B cell (primary cell): ENCODE measurements at regions of chr16 and their contacts with region 1.

Region 1: DNA sequence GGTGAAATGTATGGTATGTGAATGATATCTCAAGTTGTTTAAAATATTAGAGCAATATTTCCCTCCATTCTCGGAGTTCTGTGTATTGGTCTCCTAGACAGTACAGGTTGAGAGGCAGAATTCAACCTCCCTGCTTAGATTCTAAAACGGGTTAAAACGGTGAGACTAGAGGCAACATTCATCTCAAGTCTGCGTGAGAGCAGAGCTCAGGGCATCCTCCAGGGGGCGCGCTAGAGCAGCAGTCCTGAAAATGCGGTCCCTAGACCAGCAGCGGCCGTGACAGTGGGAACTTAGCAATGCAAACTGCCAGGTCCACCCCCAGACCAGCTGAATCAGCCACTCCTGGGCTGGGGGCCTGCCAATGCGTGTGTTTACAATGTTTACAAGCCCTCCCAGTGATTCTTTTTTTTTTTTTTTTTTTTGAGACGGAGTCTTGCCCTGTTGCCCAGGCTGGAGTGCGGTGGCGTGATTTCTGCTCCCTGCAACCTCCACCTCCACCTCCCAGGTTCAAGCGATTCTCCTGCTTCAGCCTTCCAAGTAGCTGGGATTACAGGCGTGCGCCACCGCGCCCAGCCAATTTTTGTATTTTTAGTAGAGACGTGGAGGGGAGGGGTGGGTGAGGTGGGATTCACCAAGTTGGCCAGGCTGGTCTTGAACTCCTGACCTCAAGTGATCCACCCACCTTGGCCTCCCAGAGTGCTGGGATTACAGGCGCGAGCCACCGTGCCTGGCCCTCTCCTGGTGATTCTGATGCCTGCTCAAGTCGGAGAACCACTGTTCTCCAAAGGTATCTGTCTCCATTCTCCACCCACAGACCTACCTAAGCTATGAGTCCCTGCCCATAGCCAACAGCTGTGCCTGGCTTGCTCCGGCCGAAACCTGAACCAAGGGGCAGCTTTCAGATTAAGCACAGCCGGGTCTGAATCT is 24.2 kb downstream of the KLHL36 start:
- DNase-seq: peak; percentile 82
- ATAC-seq: peak; percentile 96
- H3K4me3 ChIP-seq: no peak overlapping the region
- H3K4me3 Mint-ChIP-seq: no peak overlapping the region
- H3K27ac ChIP-seq: no peak overlapping the region
- H3K27ac Mint-ChIP-seq: peak overlapping the region; percentile 28
- H3K4me1 ChIP-seq: peaks cover 0 to 15% of the 10 kb centered on the region in 2 donors
- H3K4me1 Mint-ChIP-seq: peaks cover 10% of the 10 kb centered on the region
- H3K27me3 ChIP-seq: no peaks in the 10 kb centered on the region
- H3K27me3 Mint-ChIP-seq: peaks cover 3% of the 10 kb centered on the region
- CTCF ChIP-seq: peak; percentile 91

Region 2: DNA sequence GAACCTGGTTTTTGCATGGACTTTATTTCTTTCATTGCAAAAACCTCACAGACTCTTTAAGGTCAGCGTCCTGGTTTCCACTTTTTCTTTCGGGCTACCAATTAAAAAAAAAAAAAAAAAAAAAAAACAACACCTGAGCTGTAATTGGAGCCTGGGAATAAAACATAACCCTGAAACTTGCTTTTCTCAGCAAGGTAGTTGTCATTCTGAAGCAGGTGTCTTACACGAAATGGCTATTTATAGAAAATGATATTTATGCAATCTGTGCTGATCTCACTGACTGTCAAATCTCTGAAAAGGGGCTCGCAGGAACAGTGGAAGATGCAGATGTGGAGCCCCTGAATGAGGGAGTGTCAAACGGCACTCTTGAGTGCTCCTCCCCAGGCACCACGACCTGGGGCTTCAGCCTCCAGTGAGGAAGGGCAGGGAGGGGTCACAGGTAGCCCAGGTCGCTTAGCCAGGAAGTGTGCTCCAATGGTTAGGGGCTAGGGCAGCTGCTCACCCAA is 44.3 kb before region 1 on chr16:
- CTCF ChIA-PET with region 1: interaction called, 37 read pairs
- POLR2A ChIA-PET with region 1: no interaction called
- intact Hi-C with region 1: loop called (anchors 2 kb)
- DNase-seq: no peak
- ATAC-seq: no peak
- H3K4me3 ChIP-seq: no peak overlapping the region
- H3K4me3 Mint-ChIP-seq: no peak overlapping the region
- H3K27ac ChIP-seq: no peak overlapping the region
- H3K27ac Mint-ChIP-seq: no peak overlapping the region
- H3K4me1 ChIP-seq: peaks cover 13 to 33% of the 10 kb centered on the region in 2 donors
- H3K4me1 Mint-ChIP-seq: peaks cover 26% of the 10 kb centered on the region
- H3K27me3 ChIP-seq: no peaks in the 10 kb centered on the region
- H3K27me3 Mint-ChIP-seq: no peaks in the 10 kb centered on the region
- CTCF ChIP-seq: no peak

Region 3: GRCh38 chr16:84687715-84688114 is 15.2 kb after region 1 on chr16:
- CTCF ChIA-PET with region 1: interaction called, 19 read pairs
- POLR2A ChIA-PET with region 1: interaction called, 4 read pairs
- intact Hi-C with region 1: no loop called
- DNase-seq: peak; percentile 72
- ATAC-seq: peak; percentile 97
- H3K4me3 ChIP-seq: no peak overlapping the region
- H3K4me3 Mint-ChIP-seq: peak overlapping the region; percentile 74
- H3K27ac ChIP-seq: no peak overlapping the region
- H3K27ac Mint-ChIP-seq: peak overlapping the region; percentile 85
- H3K4me1 ChIP-seq: peaks cover 10 to 17% of the 10 kb centered on the region in 2 donors
- H3K4me1 Mint-ChIP-seq: peaks cover 21% of the 10 kb centered on the region
- H3K27me3 ChIP-seq: no peaks in the 10 kb centered on the region
- H3K27me3 Mint-ChIP-seq: peaks cover 7% of the 10 kb centered on the region
- CTCF ChIP-seq: no peak

Region 4: GRCh38 chr16:84720177-84720579 is 47.6 kb after region 1 on chr16:
- CTCF ChIA-PET with region 1: interaction called, 108 read pairs
- POLR2A ChIA-PET with region 1: interaction called, 6 read pairs
- intact Hi-C with region 1: no loop called
- DNase-seq: no peak
- ATAC-seq: no peak
- H3K4me3 ChIP-seq: no peak overlapping the region
- H3K4me3 Mint-ChIP-seq: no peak overlapping the region
- H3K27ac ChIP-seq: peak overlapping the region in 1 of 2 donors; percentile 1
- H3K27ac Mint-ChIP-seq: peak overlapping the region; percentile 26
- H3K4me1 ChIP-seq: peaks cover 16 to 24% of the 10 kb centered on the region in 2 donors
- H3K4me1 Mint-ChIP-seq: peaks cover 63% of the 10 kb centered on the region
- H3K27me3 ChIP-seq: no peaks in the 10 kb centered on the region
- H3K27me3 Mint-ChIP-seq: no peaks in the 10 kb centered on the region
- CTCF ChIP-seq: no peak

Region 5: DNA sequence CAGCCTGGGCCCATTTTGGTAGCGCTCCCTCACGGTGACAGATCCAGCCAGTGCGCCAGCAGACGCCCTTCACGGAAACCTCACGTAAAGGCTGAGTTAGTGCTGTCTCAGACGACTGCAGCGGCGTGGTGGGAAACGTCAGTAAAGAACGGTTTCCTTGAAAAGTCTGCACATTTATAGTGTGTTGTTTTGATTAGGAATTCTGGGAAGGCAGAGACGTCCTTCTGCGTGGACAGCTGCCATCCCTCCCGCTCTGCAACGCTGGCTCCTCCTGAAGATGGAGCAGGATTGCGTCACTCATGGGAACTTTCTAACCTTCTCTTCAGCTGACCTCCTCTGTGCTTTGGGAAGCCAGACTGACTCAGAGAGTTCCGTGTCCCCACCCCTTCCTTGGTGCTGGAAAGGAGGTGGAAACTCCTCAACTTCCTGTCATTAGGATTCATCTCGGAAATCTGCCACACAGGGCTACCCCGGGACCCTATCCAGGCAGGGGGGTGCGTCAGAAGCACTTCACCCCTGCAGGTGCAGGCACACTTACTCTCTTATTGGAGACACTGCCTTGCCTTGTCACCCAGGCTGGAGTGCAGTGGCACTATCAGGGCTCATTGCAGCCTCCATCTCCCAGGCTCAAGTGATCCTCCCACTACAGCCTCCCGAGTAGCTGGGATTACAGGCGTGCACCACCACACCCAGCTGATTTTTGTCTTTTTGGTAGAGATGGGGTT is 123.0 kb after region 1 on chr16:
- CTCF ChIA-PET with region 1: no interaction called
- POLR2A ChIA-PET with region 1: no interaction called
- intact Hi-C with region 1: no loop called
- DNase-seq: no peak
- ATAC-seq: no peak
- H3K4me3 ChIP-seq: no peak overlapping the region
- H3K4me3 Mint-ChIP-seq: no peak overlapping the region
- H3K27ac ChIP-seq: no peak overlapping the region
- H3K27ac Mint-ChIP-seq: no peak overlapping the region
- H3K4me1 ChIP-seq: no peaks in the 10 kb centered on the region
- H3K4me1 Mint-ChIP-seq: no peaks in the 10 kb centered on the region
- H3K27me3 ChIP-seq: no peaks in the 10 kb centered on the region
- H3K27me3 Mint-ChIP-seq: no peaks in the 10 kb centered on the region
- CTCF ChIP-seq: no peak

Region 6: DNA sequence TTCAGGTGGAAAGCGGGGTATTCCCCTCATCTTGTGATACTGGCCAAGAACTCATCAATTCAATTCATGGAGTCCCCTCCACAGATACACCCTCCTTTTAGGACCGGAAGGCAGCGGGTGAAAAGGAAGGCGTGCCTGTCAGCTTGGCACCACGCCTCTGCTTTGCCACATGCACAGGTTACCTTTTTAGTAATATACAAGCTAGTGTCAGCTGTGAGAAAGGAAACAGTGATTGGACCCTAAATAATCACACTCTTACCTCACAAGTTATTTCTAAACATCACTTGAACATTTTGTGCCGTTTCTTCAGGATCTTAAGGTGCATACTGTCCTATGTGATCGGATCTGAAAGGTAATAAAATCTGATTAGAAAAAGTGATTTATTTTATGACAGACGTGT is 323.1 kb after region 1 on chr16:
- CTCF ChIA-PET with region 1: no interaction called
- POLR2A ChIA-PET with region 1: no interaction called
- intact Hi-C with region 1: no loop called
- DNase-seq: no peak
- ATAC-seq: no peak
- H3K4me3 ChIP-seq: no peak overlapping the region
- H3K4me3 Mint-ChIP-seq: no peak overlapping the region
- H3K27ac ChIP-seq: no peak overlapping the region
- H3K27ac Mint-ChIP-seq: no peak overlapping the region
- H3K4me1 ChIP-seq: peaks cover 0 to 7% of the 10 kb centered on the region in 2 donors
- H3K4me1 Mint-ChIP-seq: peaks cover 16% of the 10 kb centered on the region
- H3K27me3 ChIP-seq: no peaks in the 10 kb centered on the region
- H3K27me3 Mint-ChIP-seq: no peaks in the 10 kb centered on the region
- CTCF ChIP-seq: no peak